Ascending aorta (tissue), 2 donors: ENCODE measurements at regions of chr5 and their contacts with region 1.

Region 1: DNA sequence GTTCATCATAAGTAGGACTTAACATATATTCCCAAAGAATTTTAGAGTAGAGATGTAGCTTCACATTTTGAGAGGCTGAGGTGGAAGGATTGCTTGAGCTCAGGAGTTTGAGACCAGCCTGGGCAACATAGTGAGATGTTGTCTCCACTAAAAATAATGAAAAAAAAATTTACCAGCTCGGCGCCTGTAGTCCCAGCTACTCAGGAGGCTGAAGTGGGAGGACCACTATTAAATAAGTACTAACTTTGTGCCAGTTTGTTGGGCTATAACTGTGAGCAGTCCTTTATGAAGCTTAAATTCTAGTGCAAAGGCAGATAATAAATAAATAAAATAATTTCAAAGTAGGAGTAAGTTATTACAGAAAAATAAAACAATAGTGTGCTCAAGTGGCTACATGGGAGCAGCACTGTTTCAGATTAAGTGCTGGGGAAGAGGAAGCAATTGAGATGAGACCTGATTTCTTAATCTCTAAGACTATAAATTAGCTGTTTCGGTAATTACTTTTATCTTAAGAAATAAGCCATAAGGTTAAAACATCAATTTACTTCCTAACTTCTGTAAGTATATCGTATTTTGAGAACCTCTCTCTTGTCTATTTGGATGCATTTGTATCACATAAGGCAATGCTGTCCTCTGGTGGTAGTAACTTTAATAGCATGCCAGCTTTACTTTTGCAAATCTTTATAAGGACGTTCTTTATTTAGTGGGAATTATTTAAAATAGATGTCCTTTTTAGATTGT is 98.9 kb downstream of the CSNK1G3 start:
- DNase-seq: no peak
- H3K4me3 ChIP-seq: no peak overlapping the region
- H3K27ac ChIP-seq: peak overlapping the region in 1 of 2 donors; percentile 29
- H3K4me1 ChIP-seq: no peaks in the 10 kb centered on the region
- H3K27me3 ChIP-seq: no peaks in the 10 kb centered on the region
- CTCF ChIP-seq: peak; percentile 83 to 96 (median 95)

Region 2: DNA sequence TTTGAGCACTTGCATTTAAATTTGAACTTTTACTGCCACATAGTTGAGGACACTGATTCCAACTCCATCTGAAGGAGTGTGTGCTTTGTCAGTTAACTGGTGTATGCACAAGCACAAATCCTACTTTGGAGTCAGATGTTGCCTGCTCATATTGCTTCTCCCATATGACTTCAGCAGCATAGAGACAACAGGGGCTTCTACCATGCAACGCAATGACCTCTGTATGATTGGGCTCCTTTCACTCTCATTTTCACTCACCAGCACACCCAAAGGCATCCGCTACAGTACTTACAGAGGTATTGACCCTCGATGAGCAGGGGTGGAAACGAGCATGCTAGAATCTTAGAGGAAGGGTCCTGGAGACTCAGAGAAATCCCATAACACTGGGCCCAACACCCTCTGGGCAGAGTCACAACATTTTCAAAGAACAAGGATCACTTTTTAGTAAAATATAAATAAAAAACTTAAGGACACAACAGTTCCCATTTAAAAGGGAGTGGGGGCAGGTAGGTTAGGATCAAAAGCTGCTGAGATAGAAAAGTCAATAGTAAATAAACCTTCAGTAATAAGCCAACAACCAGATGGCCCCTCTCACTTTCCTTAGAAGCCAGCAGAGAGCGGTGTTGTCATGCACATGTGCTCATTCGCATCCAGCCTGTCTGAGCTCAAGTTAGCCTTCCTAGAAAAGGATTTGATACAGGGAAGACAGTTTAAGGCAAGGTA is 1095.0 kb before region 1 on chr5:
- intact Hi-C with region 1: loop called (anchors 5 kb)
- DNase-seq: peak in 1 of 2 donors; percentile 69
- H3K4me3 ChIP-seq: no peak overlapping the region
- H3K27ac ChIP-seq: no peak overlapping the region
- H3K4me1 ChIP-seq: no peaks in the 10 kb centered on the region
- H3K27me3 ChIP-seq: no peaks in the 10 kb centered on the region
- CTCF ChIP-seq: peak; percentile 15 to 72 (median 52)

Region 3: GRCh38 chr5:123083298-123083697 is 527.5 kb before region 1 on chr5:
- intact Hi-C with region 1: loop called (anchors 5 kb)
- DNase-seq: no peak
- H3K4me3 ChIP-seq: no peak overlapping the region
- H3K27ac ChIP-seq: peak overlapping the region in 1 of 2 donors; percentile 1
- H3K4me1 ChIP-seq: no peaks in the 10 kb centered on the region
- H3K27me3 ChIP-seq: no peaks in the 10 kb centered on the region
- CTCF ChIP-seq: no peak

Region 4: DNA sequence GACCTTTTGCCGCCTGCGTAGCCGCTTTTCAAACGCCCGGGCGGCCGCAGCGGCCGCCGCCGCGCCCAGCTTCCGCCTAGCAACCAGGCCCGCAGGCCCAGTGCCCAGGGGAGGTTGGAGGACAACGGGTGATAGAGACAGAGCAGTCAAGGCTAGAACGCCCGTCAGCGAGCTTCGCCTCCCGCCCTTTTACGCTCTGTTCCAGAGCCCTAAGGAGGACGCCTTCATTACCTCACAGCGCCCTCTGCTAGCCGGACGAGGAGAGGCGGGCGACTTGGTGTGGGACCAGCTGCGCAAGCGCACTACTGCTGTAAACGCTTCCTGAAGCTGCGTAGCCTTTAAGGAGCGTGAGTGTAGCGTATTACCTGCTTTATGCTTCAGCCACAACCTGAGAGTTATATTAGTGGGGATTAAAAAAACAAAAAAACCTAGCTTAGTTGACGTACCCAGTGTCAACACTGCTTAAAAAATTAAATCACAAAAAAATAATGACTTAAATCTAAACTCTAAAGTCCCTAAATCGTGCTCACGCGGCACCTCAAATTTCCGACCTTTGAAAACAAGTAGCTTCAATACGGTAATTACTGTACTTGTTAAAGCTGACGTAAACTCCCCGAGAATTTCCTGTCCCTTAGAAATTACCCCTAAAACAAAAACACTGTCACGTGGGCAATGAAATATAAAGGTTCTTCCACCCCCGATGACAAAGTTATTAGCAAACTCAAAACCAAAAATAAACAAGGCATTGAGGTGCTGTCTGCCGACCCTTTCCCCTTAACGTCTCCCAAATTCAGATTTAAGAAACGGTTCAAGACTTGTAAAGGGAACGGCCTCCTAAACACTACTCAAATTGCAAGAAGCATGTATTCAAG is 187.3 kb before region 1 on chr5 and contains the start of gene CEP120:
- intact Hi-C with region 1: loop called (anchors 1 kb)
- DNase-seq: peak; percentile 93 to 99
- H3K4me3 ChIP-seq: peak within 1 kb of the TSS; percentile 73 to 86
- H3K27ac ChIP-seq: peak within 1 kb of the TSS; percentile 83 to 87
- H3K4me1 ChIP-seq: peaks cover 0 to 8% of the 10 kb centered on the region in 2 donors
- H3K27me3 ChIP-seq: no peaks in the 10 kb centered on the region
- CTCF ChIP-seq: peak; percentile 68 to 87 (median 81)
- total RNA-seq, gene CEP120: 11.6 TPM

Region 5: GRCh38 chr5:123881759-123882244 is 271.0 kb after region 1 on chr5:
- intact Hi-C with region 1: no loop called
- DNase-seq: no peak
- H3K4me3 ChIP-seq: no peak overlapping the region
- H3K27ac ChIP-seq: no peak overlapping the region
- H3K4me1 ChIP-seq: no peaks in the 10 kb centered on the region
- H3K27me3 ChIP-seq: no peaks in the 10 kb centered on the region
- CTCF ChIP-seq: no peak

Region 6: GRCh38 chr5:124596595-124597388 is 986.0 kb after region 1 on chr5:
- intact Hi-C with region 1: no loop called
- DNase-seq: no peak
- H3K4me3 ChIP-seq: no peak overlapping the region
- H3K27ac ChIP-seq: no peak overlapping the region
- H3K4me1 ChIP-seq: peaks cover 0 to 6% of the 10 kb centered on the region in 2 donors
- H3K27me3 ChIP-seq: no peaks in the 10 kb centered on the region
- CTCF ChIP-seq: no peak